Upper lobe of right lung (tissue), 1 donor: ENCODE measurements at regions of chr10 and their contacts with region 1.

Region 1: DNA sequence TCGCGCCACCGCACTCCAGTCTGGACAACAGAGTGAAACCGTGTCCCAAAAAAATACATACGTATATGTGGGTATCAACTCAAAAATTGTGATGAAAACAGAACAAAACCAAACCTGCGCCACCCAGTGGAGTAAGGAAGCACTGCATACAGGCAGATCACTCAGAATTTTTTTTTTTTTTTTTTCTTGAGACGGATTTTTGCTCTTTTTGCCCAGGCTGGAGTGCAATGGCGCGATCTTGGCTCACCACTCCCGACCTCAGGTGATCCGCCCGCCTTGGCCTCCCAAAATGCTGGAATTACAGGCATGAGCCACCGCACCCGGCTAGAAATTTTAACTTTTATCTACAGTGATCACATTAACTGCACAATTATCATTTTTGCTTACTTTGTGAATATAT is 9.1 kb upstream of the TMEM236 start:
- DNase-seq: peak; percentile 71
- ATAC-seq: peak; percentile 84
- H3K4me3 ChIP-seq: no peak overlapping the region
- H3K27ac ChIP-seq: no peak overlapping the region
- H3K4me1 ChIP-seq: peaks cover 11% of the 10 kb centered on the region
- H3K27me3 ChIP-seq: no peaks in the 10 kb centered on the region
- CTCF ChIP-seq: peak; percentile 90

Region 2: GRCh38 chr10:17617031-17617911 is 125.6 kb before region 1 on chr10 and contains the start of gene HACD1:
- intact Hi-C with region 1: loop called (anchors 10 kb)
- DNase-seq: peak; percentile 90
- ATAC-seq: peak; percentile 93
- H3K4me3 ChIP-seq: peak within 1 kb of the TSS; percentile 87
- H3K27ac ChIP-seq: peak within 1 kb of the TSS; percentile 88
- H3K4me1 ChIP-seq: peaks cover 9% of the 10 kb centered on the region
- H3K27me3 ChIP-seq: peaks cover 6% of the 10 kb centered on the region
- CTCF ChIP-seq: peak; percentile 20
- total RNA-seq, gene HACD1: 34.3 TPM

Region 3: DNA sequence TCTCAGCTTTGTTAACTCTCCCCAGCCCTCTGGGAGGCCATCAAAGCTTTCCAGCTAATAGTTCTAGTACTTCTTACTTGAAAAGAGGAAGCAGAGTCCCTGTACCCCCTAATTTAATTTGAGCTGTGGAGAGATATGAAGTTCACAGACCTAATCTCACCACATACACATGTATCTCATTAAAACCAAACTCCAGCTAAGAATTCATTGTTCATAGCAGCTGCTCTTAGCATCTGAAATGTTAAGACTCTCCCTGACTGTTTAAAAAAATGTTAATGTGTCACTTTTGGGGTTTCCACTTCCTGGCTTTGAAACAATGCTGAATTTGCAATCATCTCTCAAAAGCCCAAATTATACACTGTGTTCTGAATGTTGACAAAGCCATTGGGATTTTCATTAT is 50.1 kb after region 1 on chr10:
- intact Hi-C with region 1: no loop called
- DNase-seq: no peak
- ATAC-seq: no peak
- H3K4me3 ChIP-seq: no peak overlapping the region
- H3K27ac ChIP-seq: no peak overlapping the region
- H3K4me1 ChIP-seq: no peaks in the 10 kb centered on the region
- H3K27me3 ChIP-seq: no peaks in the 10 kb centered on the region
- CTCF ChIP-seq: no peak